Dorsolateral prefrontal cortex (tissue), 120 donors: ENCODE measurements at regions of chr2 and their contacts with region 1.

Region 1: GRCh38 chr2:24971536-24972314 is at the start of gene DNAJC27:
- DNase-seq: peak; percentile 95 to 99 (median 98)
- H3K4me3 ChIP-seq: peak within 1 kb of the TSS; percentile 61 to 98 (median 91)
- H3K27ac ChIP-seq: peak within 1 kb of the TSS; percentile 96 to 100 (median 99)
- H3K27me3 ChIP-seq: no peaks in the 10 kb centered on the region
- CTCF ChIP-seq: peak in 26 of 56 donors; percentile 4 to 45 (median 18)
- total RNA-seq, gene DNAJC27: 10.6 to 31.2 (median 20.7) TPM

Region 2: GRCh38 chr2:24409700-24410556 is 561.8 kb before region 1 on chr2:
- intact Hi-C with region 1: loop called in 1 of 2 experiments (anchors 10 kb)
- DNase-seq: peak in 3 of 10 donors; percentile 30 to 58 (median 43)
- H3K4me3 ChIP-seq: no peak overlapping the region
- H3K27ac ChIP-seq: no peak overlapping the region
- H3K27me3 ChIP-seq: no peaks in the 10 kb centered on the region
- CTCF ChIP-seq: peak; percentile 59 to 94 (median 86)

Region 3: DNA sequence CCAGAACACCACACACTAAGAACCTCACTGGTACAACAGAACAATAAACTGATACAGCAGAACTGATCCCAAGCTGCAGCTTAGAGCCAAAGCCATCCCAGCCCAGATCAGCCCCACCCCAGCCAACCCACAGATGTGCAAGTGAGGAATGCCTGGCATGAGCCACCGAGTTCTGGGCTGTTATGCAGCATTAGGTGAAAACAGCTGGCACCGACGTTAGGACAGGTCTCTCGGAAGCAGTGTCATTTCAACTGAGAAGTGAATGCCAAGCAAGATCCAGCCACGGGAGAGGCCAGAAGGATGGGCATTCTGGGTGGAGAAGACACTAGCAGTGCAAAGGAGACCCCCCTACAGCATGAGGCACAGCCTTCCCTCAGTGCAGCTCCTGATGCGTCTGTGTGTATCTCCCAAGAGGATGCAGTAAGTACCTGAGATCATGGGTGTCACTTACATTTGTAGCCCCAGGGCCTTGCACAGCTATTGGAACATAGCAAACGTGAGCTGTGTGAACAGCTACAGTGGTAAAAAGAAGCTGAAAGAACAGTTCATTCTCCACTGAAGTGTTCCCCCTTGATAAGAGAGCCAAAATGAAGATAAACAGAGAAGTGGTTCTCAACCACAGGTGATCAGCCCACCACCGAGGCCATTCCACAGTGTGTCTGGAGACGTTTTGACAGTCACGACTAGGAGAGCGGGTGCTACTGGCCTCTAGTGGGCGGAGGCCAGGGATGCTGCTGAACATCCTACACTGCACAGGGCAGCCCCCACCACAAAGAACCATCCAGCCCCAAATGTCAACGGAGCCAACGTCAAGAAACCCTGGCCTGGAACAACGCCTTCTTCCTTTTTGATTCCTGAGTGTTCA is 90.3 kb before region 1 on chr2:
- intact Hi-C with region 1: loop called in 1 of 2 experiments (anchors 2 kb)
- DNase-seq: peak in 6 of 10 donors; percentile 46 to 71 (median 54)
- H3K4me3 ChIP-seq: peak overlapping the region in 8 of 59 donors; percentile 1 to 32 (median 9)
- H3K27ac ChIP-seq: peak overlapping the region in 57 of 59 donors; percentile 23 to 93 (median 80)
- H3K27me3 ChIP-seq: no peaks in the 10 kb centered on the region
- CTCF ChIP-seq: peak in 46 of 56 donors; percentile 8 to 67 (median 44)

Region 4: GRCh38 chr2:24920098-24920808 is 51.5 kb before region 1 on chr2 and contains the start of gene ADCY3:
- intact Hi-C with region 1: loop called (anchors 5 kb)
- DNase-seq: peak in 6 of 10 donors; percentile 56 to 81 (median 64)
- H3K4me3 ChIP-seq: peak within 1 kb of the TSS; percentile 57 to 86 (median 73)
- H3K27ac ChIP-seq: peak within 1 kb of the TSS in 56 of 59 donors; percentile 5 to 88 (median 74)
- H3K27me3 ChIP-seq: no peaks in the 10 kb centered on the region
- CTCF ChIP-seq: no peak
- total RNA-seq, gene ADCY3: 67.4 to 150 (median 95.0) TPM

Region 5: DNA sequence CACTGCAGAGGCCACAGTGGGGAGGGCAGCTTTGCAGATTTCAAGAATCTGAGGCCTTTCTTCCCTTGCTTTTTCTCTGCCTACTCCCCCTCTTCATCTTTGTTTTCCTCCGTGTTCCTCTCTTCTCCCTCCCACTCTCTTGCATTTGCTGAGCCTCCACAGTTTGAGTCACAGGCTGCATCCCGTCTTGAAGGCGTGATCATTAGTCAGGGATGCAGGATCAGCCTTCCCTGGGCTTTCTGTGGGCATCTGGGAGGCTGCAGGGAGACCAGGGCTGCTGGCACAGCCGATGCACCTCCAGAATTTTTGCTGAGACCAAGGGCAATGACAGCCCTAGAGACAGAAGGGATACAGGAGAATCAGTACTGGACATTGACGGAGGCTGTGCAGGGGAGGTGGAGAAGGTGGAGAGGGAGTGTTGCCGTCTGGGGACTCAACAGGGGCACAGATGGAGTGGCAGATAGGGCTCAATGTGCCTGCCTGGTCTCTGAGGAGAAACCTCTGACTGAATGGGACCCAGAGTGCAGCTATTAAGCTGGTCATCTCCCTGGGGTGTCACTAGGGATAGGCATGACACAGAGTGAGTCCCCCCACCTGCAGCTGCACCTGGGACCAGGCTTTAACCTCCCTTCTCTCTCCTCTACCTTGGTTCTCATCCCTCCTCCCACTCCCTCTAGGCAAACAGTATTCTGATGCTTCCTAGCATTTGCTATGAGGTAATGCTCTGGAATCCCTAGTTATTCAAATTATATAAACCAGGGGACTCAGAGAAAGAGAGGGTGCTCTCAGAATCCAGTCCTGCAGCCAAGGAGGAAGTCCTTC is 29.0 kb after region 1 on chr2:
- intact Hi-C with region 1: no loop called
- DNase-seq: peak in 7 of 10 donors; percentile 46 to 74 (median 53)
- H3K4me3 ChIP-seq: no peak overlapping the region
- H3K27ac ChIP-seq: peak overlapping the region in 51 of 59 donors; percentile 8 to 87 (median 66)
- H3K27me3 ChIP-seq: no peaks in the 10 kb centered on the region
- CTCF ChIP-seq: no peak

Region 6: GRCh38 chr2:25041928-25042320 is 70.2 kb after region 1 on chr2 and contains the start of gene EFR3B:
- intact Hi-C with region 1: loop called in 1 of 2 experiments (anchors 5 kb)
- DNase-seq: peak; percentile 92 to 97 (median 96)
- H3K4me3 ChIP-seq: peak within 1 kb of the TSS; percentile 70 to 98 (median 87)
- H3K27ac ChIP-seq: peak within 1 kb of the TSS; percentile 52 to 96 (median 91)
- H3K27me3 ChIP-seq: no peaks in the 10 kb centered on the region
- CTCF ChIP-seq: peak in 16 of 56 donors; percentile 1 to 45 (median 26)
- total RNA-seq, gene EFR3B: 44.3 to 131 (median 75.5) TPM

Region 7: GRCh38 chr2:25063876-25064660 is 92.3 kb after region 1 on chr2:
- intact Hi-C with region 1: loop called (anchors 5 kb)
- DNase-seq: peak in 9 of 10 donors; percentile 49 to 81 (median 73)
- H3K4me3 ChIP-seq: peak overlapping the region in 33 of 59 donors; percentile 1 to 39 (median 21)
- H3K27ac ChIP-seq: peak overlapping the region; percentile 43 to 98 (median 93)
- H3K27me3 ChIP-seq: no peaks in the 10 kb centered on the region
- CTCF ChIP-seq: no peak